K562 (cell line): ENCODE measurements at regions of chr9 and their contacts with region 1.

Region 1: DNA sequence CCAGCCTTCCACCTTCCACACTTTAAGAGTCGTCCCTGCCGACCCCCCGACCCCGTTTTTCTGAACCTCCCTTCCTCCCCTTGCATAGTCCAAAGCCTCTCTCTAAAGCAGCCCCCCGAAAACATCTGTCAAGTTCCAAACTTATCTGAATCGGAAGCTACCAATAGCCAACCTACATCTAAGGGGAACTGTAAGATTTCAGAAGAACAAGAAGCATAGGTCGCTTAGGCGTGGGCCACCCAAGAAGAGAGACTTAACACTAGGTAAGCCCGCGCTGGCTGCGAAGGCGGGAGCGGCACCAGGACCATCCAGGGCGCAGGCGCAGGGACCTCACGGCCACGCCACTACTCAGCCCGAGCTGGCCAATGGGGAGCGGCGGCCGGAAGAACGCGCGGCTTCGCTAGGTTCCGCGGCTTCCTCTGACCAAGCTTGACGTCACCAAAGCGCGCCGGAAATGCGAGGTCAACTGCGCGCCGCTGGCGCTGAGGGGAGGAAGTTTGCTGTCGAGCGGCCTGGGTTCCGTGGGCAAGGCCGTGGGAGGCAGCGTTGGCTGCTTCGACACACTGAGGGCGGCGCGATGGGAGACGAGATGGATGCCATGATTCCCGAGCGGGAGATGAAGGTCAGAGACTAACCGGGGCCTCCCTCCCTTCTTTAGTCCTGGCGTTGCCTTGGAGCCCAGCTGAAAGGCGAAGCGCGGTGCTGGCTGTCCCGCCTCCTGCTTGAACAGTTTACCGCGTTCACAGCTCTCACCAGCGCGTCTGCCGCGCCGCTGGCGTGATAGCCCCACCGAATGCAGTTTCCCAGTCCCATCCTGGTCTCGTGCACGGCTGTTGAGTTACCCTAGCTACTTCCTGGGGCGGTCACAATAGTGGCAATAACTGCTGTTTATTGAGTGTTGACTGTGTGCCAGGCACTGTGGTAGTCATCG is at the start of gene NUP214:
- DNase-seq: peak; percentile 98 to 100 (median 100)
- ATAC-seq: peak; percentile 98
- H3K4me3 ChIP-seq: peak within 1 kb of the TSS; percentile 48
- H3K27ac ChIP-seq: peak within 1 kb of the TSS; percentile 76
- H3K4me1 ChIP-seq: peaks cover 13 to 23% of the 10 kb centered on the region in 2 experiments
- H3K27me3 ChIP-seq: peaks cover 13 to 14% of the 10 kb centered on the region in 2 experiments; a peak in 4 of 5 replicates
- CTCF ChIP-seq: no peak
- EP300 ChIP-seq: no peak
- POLR2A ChIP-seq: no peak
- RAD21 ChIP-seq: no peak
- polyA plus RNA-seq, gene NUP214: 78.9 to 81.6 TPM

Region 2: DNA sequence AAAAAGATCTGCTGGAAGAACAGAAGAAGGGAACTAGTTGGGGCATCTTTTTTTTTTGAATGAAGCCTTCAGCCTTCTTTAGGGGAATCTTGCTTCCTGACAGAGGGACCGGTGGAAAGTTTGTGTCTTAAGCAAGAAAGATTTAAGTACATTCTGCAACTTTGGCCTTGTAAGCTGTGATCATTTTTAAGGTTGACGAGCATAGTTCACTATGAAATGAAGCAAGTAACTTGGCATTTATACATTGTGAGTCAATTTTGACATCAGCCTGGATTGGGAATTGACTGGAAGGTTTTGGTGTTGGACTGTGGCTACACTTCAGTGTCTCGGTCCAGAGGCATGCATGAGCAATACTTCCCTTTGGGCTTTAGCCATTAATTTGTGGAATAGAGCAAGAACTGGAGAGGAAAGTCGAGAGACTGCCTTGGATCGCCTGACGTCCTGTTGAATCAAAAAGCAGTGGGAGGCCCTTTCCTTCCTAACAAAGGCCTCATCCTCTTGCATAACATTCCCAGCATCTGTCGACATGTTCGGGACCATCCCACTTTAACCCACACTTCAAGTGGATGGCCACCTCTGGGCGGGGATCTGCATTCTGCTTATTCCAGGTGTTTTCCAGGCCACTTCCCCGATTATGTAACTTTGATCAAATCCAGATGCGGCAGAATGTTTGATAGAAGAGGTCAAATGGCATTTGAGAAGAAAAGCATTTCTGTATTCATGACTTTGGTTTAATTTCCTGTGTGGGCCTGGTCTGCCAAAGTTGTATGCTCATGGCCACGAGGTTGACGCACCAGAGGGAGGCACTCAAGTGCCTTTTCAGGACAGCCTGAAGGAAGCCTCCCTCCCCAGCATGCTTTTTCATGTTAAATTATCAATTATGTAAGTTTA is 277.8 kb before region 1 on chr9:
- CTCF ChIA-PET with region 1: no interaction called
- POLR2A ChIA-PET with region 1: no interaction called
- in situ Hi-C with region 1: no loop called
- intact Hi-C with region 1: no loop called
- DNase-seq: peak in 1 of 4 experiments; percentile 66
- ATAC-seq: no peak
- H3K4me3 ChIP-seq: no peak overlapping the region
- H3K27ac ChIP-seq: no peak overlapping the region
- H3K4me1 ChIP-seq: peaks cover 26 to 29% of the 10 kb centered on the region in 2 experiments
- H3K27me3 ChIP-seq: no peaks in the 10 kb centered on the region
- CTCF ChIP-seq: no peak
- EP300 ChIP-seq: no peak
- POLR2A ChIP-seq: no peak
- RAD21 ChIP-seq: no peak

Region 3: DNA sequence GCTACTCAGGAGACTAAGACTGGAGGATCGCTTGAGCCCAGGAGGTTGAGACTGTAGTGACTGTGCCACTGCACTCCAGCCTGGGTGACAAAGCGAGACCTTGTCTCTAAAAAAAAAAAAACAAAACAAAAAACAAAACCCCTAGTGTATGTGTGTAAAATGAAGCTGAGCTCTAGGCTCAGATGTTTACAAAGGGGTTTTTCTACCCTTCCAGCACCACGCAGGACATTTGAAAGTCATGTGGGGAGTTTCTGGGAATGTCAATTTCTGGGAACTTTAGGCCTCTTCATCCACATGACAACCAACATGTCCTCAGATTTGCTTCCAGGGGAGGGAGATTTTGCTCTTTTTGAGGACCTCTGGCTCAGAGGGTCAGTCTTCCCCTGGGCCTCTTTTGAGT is 71.5 kb before region 1 on chr9:
- CTCF ChIA-PET with region 1: no interaction called
- POLR2A ChIA-PET with region 1: interaction called, 3,336 read pairs
- in situ Hi-C with region 1: no loop called
- intact Hi-C with region 1: loop called (anchors 1 kb)
- DNase-seq: no peak
- ATAC-seq: no peak
- H3K4me3 ChIP-seq: no peak overlapping the region
- H3K27ac ChIP-seq: no peak overlapping the region
- H3K4me1 ChIP-seq: peaks cover 0 to 15% of the 10 kb centered on the region in 2 experiments; a peak in 2 of 5 replicates
- H3K27me3 ChIP-seq: peaks cover 70 to 87% of the 10 kb centered on the region in 2 experiments
- CTCF ChIP-seq: no peak
- EP300 ChIP-seq: no peak
- POLR2A ChIP-seq: no peak
- RAD21 ChIP-seq: no peak

Region 4: GRCh38 chr9:131138676-131139075 is 13.3 kb after region 1 on chr9:
- CTCF ChIA-PET with region 1: interaction called, 3 read pairs
- POLR2A ChIA-PET with region 1: interaction called, 583 read pairs
- in situ Hi-C with region 1: no loop called
- intact Hi-C with region 1: no loop called
- DNase-seq: peak in 3 of 4 experiments; percentile 63 to 80 (median 78)
- ATAC-seq: peak; percentile 7
- H3K4me3 ChIP-seq: no peak overlapping the region
- H3K27ac ChIP-seq: no peak overlapping the region
- H3K4me1 ChIP-seq: peaks cover 0 to 6% of the 10 kb centered on the region in 2 experiments; a peak in 2 of 5 replicates
- H3K27me3 ChIP-seq: no peaks in the 10 kb centered on the region
- CTCF ChIP-seq: no peak
- EP300 ChIP-seq: no peak
- POLR2A ChIP-seq: no peak
- RAD21 ChIP-seq: no peak

Region 5: GRCh38 chr9:131167146-131167692 is 41.8 kb after region 1 on chr9:
- CTCF ChIA-PET with region 1: no interaction called
- POLR2A ChIA-PET with region 1: interaction called, 19 read pairs
- in situ Hi-C with region 1: no loop called
- intact Hi-C with region 1: no loop called
- DNase-seq: peak in 1 of 4 experiments; percentile 48
- ATAC-seq: peak; percentile 33
- H3K4me3 ChIP-seq: no peak overlapping the region
- H3K27ac ChIP-seq: no peak overlapping the region
- H3K4me1 ChIP-seq: no peaks in the 10 kb centered on the region
- H3K27me3 ChIP-seq: no peaks in the 10 kb centered on the region
- CTCF ChIP-seq: no peak
- EP300 ChIP-seq: no peak
- POLR2A ChIP-seq: no peak
- RAD21 ChIP-seq: no peak

Region 6: GRCh38 chr9:131197160-131197911 is 71.9 kb after region 1 on chr9:
- CTCF ChIA-PET with region 1: no interaction called
- POLR2A ChIA-PET with region 1: interaction called, 13 read pairs
- in situ Hi-C with region 1: no loop called
- intact Hi-C with region 1: no loop called
- DNase-seq: peak in 3 of 4 experiments; percentile 58 to 73 (median 70)
- ATAC-seq: peak; percentile 21
- H3K4me3 ChIP-seq: no peak overlapping the region
- H3K27ac ChIP-seq: no peak overlapping the region
- H3K4me1 ChIP-seq: peaks cover 0 to 4% of the 10 kb centered on the region in 2 experiments; a peak in 1 of 5 replicates
- H3K27me3 ChIP-seq: no peaks in the 10 kb centered on the region
- CTCF ChIP-seq: no peak
- EP300 ChIP-seq: no peak
- POLR2A ChIP-seq: no peak
- RAD21 ChIP-seq: no peak

Region 7: DNA sequence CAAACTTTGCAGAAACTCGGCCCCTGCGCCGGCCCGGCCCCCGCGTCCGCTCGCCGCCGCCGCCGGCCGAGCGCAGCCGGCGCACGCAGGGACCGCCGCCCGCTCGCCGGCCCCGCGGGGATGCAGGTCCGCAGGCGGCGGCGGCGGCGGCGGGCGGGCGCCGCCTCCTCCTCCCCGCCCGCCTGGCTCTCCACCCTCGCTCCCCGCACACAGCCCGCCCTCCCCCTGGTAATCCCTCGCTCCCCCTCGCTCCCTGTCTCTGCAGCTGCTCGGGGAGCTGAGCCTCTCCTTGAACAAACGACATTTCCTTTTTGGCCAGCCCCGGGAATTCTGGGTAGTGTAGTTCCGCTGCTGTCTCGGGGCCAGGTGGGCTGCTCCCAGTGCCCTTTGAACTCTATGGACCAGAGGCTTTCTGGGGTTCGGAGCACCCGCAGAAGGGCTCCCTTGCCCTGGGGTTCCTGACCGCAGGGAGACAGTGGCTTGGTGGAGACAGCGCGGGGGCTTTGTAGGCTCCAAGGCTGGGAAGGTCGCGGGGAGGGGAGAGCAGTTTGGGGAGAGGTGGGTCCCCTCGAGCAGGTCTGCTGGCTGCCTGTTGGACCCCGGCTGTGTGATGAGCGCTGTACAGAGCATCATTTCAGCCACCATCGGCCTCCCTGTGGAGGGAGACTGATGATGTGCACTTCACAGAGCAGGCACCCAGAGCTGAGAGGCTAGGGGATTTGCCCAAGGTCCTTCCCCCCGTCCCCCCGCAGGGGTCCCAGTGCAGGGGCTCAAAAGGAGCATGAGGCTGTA is 152.7 kb after region 1 on chr9:
- CTCF ChIA-PET with region 1: no interaction called
- POLR2A ChIA-PET with region 1: interaction called, 8 read pairs
- in situ Hi-C with region 1: no loop called
- intact Hi-C with region 1: loop called (anchors 1 kb)
- DNase-seq: peak; percentile 100
- ATAC-seq: peak; percentile 65
- H3K4me3 ChIP-seq: peak overlapping the region; percentile 65
- H3K27ac ChIP-seq: peak overlapping the region; percentile 75
- H3K4me1 ChIP-seq: peaks cover 28 to 75% of the 10 kb centered on the region in 2 experiments
- H3K27me3 ChIP-seq: peaks cover 3 to 13% of the 10 kb centered on the region in 2 experiments; a peak in 3 of 5 replicates
- CTCF ChIP-seq: no peak; a peak in 1 of 6 replicates
- EP300 ChIP-seq: peak; percentile 40; the same call in 1 of the 2 replicates
- POLR2A ChIP-seq: no peak
- RAD21 ChIP-seq: no peak

Region 8: DNA sequence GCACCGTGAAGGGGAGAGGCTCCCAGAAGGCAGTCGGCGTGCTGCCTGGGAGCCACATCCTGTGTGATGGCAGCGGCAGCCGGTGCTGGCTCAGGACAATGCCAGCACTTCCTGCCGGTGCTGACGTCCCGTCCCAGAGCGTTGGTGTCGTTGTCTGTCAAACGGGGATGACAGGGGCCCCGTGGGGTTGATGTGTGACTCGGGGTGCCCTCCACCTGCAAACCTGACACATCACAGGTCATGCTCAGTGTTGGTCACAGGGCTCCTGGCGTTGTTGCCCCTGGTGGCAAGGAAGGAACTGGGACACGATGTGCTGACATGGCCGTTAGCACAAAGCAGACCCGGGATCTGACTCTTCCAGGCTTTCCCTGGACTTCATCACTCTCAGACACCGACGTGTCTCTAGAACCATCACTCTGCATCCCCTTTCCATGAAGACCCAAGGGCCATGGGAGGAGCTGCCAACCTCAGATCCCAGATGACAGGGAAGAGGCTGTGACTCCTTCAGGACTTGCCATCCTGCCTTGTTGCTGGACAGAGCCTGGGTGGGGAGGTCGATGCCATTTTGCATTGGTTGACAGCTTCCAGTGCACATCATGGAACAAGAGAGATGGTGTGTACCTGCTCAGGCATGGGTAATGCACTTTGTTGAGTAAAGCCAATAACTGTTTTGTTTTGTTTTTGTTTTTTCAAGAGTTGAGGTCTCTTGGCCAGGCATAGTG is 185.6 kb after region 1 on chr9:
- CTCF ChIA-PET with region 1: no interaction called
- POLR2A ChIA-PET with region 1: no interaction called
- in situ Hi-C with region 1: no loop called
- intact Hi-C with region 1: no loop called
- DNase-seq: no peak
- ATAC-seq: no peak
- H3K4me3 ChIP-seq: no peak overlapping the region
- H3K27ac ChIP-seq: no peak overlapping the region
- H3K4me1 ChIP-seq: peaks cover 10 to 61% of the 10 kb centered on the region in 2 experiments; a peak in 4 of 5 replicates
- H3K27me3 ChIP-seq: no peaks in the 10 kb centered on the region
- CTCF ChIP-seq: no peak
- EP300 ChIP-seq: no peak
- POLR2A ChIP-seq: no peak
- RAD21 ChIP-seq: no peak

Region 9: GRCh38 chr9:131423171-131423581 is 297.8 kb after region 1 on chr9:
- CTCF ChIA-PET with region 1: no interaction called
- POLR2A ChIA-PET with region 1: no interaction called
- in situ Hi-C with region 1: no loop called
- intact Hi-C with region 1: no loop called
- DNase-seq: no peak
- ATAC-seq: no peak
- H3K4me3 ChIP-seq: no peak overlapping the region
- H3K27ac ChIP-seq: no peak overlapping the region
- H3K4me1 ChIP-seq: peaks cover 10 to 12% of the 10 kb centered on the region in 2 experiments; a peak in 4 of 5 replicates
- H3K27me3 ChIP-seq: no peaks in the 10 kb centered on the region
- CTCF ChIP-seq: no peak
- EP300 ChIP-seq: no peak
- POLR2A ChIP-seq: no peak
- RAD21 ChIP-seq: no peak